ENCODE measurements at regions of chr6 and their contacts with region 1.

Region 1: GRCh38 chr6:109482905-109483735 is at the start of gene ZBTB24:
- DNase-seq: peak; percentile 87
- H3K4me3 Mint-ChIP-seq: peak within 1 kb of the TSS; percentile 98
- H3K27ac Mint-ChIP-seq: peak within 1 kb of the TSS; percentile 92
- H3K4me1 Mint-ChIP-seq: peaks cover 47% of the 10 kb centered on the region
- H3K27me3 Mint-ChIP-seq: peaks cover 1% of the 10 kb centered on the region
- total RNA-seq, gene ZBTB24: 19.5 and 20.8 TPM in 2 replicates

Region 2: DNA sequence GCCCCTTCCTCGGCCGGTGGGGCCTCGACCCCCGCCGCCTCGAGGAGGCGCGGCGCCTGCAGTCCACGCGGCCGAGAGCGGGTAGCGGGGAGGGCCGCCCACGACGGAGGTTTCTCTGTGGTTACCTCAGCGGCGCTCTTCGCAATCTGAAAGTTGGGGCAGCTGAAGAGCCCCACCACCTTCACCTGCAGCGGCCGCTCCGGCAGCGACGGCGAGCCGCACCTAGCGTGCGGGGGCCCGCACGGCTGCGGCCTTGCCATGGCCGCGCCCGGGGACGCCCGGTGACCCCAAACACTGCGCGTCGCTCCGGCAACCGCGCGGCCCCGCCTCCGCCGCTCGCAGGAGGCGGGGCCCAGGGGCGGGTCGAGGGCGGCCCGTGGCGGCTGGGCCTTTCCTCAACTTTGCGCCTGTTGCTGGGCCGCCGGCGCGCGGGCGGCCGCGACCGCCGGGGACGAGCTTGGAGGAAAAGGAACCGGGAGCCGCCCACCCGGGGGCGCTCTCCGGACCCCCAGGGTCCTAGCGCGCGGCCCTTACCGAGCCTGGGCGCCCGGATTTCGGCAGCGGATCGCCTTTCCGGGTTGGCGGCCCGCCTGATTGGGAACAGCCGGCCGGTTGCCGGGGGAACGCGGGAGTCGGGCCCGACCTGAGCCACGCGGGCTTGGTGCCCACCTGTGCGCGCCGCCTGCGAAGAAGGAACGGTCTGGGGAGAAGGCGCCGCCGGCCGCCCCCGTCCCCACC is 42.6 kb before region 1 on chr6 and contains the starts of genes PPIL6 and SMPD2:
- intact Hi-C with region 1: loop called (anchors 1 kb)
- DNase-seq: peak; percentile 79
- H3K4me3 Mint-ChIP-seq: peak within 1 kb of the TSS; percentile 88
- H3K27ac Mint-ChIP-seq: peak within 1 kb of the TSS; percentile 91
- H3K4me1 Mint-ChIP-seq: peaks cover 23% of the 10 kb centered on the region
- H3K27me3 Mint-ChIP-seq: peaks cover 5% of the 10 kb centered on the region
- total RNA-seq, gene PPIL6: 0.13 and 0.29 TPM in 2 replicates
- total RNA-seq, gene SMPD2: 18.5 and 19.1 TPM in 2 replicates

Region 3: DNA sequence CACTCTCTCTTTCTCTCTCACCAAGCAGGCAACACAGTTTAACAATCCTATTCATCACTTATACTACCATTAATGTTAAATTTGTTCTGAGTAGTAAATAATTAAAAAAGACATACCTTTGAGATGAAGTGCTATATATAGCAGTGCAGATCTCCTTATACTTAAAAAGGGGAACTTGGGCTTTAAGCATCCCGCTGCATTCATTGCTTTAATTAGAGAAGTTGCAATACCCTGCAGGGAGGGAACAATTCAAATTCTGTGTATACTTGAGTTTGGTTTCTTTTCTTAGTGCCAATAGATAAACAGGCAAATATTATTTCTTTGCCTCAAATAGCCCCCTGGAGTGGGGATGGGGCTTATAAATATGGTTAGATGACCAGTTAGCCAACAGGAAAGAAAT is 10.7 kb after region 1 on chr6:
- intact Hi-C with region 1: no loop called
- DNase-seq: no peak
- H3K4me3 Mint-ChIP-seq: no peak overlapping the region
- H3K27ac Mint-ChIP-seq: no peak overlapping the region
- H3K4me1 Mint-ChIP-seq: peaks cover 45% of the 10 kb centered on the region
- H3K27me3 Mint-ChIP-seq: peaks cover 5% of the 10 kb centered on the region

Region 4: DNA sequence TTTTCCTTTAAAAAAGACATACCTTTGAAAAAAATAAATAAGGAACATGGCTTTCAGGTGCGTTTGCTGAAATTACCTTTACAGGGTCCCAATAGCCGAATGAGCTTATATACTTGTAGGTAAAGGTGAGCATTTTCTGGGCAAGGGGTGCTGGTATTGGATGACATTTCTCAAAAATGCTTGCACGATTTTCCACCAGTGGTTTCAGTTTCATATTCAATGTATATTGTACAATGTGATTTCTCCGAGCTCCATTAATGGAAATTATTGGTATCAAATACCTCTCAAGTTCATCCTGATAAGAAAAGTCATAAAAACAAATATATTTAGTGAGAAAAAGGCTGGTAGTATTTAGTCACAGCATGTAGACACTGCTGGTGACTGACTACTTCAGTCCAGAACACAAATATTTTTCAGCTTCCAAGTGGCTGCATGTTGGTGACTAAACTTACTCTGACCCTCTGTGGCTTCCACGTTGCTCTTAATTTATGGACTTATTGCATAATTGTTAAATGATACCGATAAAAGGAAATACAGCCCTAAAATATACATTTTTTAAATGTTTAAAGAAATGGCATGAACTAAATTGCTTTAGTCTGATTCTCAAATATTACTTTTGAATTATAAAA is 32.8 kb after region 1 on chr6:
- intact Hi-C with region 1: loop called (anchors 5 kb)
- DNase-seq: no peak
- H3K4me3 Mint-ChIP-seq: peak overlapping the region; percentile 43
- H3K27ac Mint-ChIP-seq: no peak overlapping the region
- H3K4me1 Mint-ChIP-seq: peaks cover 26% of the 10 kb centered on the region
- H3K27me3 Mint-ChIP-seq: no peaks in the 10 kb centered on the region

Measured in activated T-helper 1 cell treated with anti-CD3 and anti-CD28 coated beads, Interleukin-12 subunit alpha, Interleukin-12 subunit beta, Interleukin-2, Interleukin-4 antibody, amounts not matched to agents 30 ng/mL and 10 ng/mL and 1 ng/mL, durations not matched to agents 14 hours and 24 hours and 36 hours (primary cell).